ENCODE measurements at regions of chr10 and their contacts with region 1.

Region 1: DNA sequence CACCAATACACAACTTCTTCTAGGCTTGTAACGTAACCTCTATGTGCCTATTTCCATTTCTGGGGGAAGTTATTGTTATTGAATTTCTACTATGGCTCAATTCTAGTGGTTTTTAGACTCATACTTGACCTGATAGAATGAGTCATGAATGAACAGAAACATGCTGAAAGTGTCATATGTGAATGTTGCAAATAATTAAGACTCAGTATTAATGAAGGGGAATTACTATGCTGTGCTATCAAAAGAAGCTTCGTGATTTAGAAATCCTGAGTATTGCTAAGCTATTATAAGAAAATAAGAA is 135.1 kb upstream of the ZWINT start:
- DNase-seq: peak; percentile 27
- ATAC-seq: peak; percentile 16
- H3K4me3 ChIP-seq: no peak overlapping the region
- H3K27ac ChIP-seq: peak overlapping the region; percentile 8
- H3K4me1 ChIP-seq: peaks cover 12% of the 10 kb centered on the region
- H3K27me3 ChIP-seq: no peaks in the 10 kb centered on the region
- CTCF ChIP-seq: no peak

Region 2: GRCh38 chr10:56507033-56507432 is 10.9 kb after region 1 on chr10:
- CTCF ChIA-PET with region 1: no interaction called
- POLR2A ChIA-PET with region 1: no interaction called
- intact Hi-C with region 1: loop called (anchors 2 kb)
- DNase-seq: no peak
- ATAC-seq: no peak
- H3K4me3 ChIP-seq: no peak overlapping the region
- H3K27ac ChIP-seq: no peak overlapping the region
- H3K4me1 ChIP-seq: no peaks in the 10 kb centered on the region
- H3K27me3 ChIP-seq: no peaks in the 10 kb centered on the region
- CTCF ChIP-seq: no peak